Right lobe of liver (tissue), 6 donors: ENCODE measurements at regions of chr20 and their contacts with region 1.

Region 1: GRCh38 chr20:44388466-44389023 is 33.0 kb downstream of the HNF4A start:
- DNase-seq: peak; percentile 83 to 97 (median 96)
- ATAC-seq: peak; percentile 69 to 88 (median 80)
- H3K4me3 ChIP-seq: peak overlapping the region in 1 of 3 donors; percentile 26
- H3K27ac ChIP-seq: peak overlapping the region in 2 of 3 donors; percentile 94 to 97
- H3K4me1 ChIP-seq: peaks cover 0 to 78% (median 29%) of the 10 kb centered on the region in 4 donors
- H3K27me3 ChIP-seq: no peaks in the 10 kb centered on the region
- CTCF ChIP-seq: peak; percentile 81 to 89 (median 87)
- POLR2A ChIP-seq: no peak

Region 2: GRCh38 chr20:44609511-44610312 is 221.2 kb after region 1 on chr20:
- intact Hi-C with region 1: loop called in 1 of 2 experiments (anchors 10 kb)
- DNase-seq: peak; percentile 87 to 91 (median 90)
- ATAC-seq: peak; percentile 97 to 98 (median 98)
- H3K4me3 ChIP-seq: peak overlapping the region; percentile 3 to 35 (median 35)
- H3K27ac ChIP-seq: peak overlapping the region; percentile 65 to 83 (median 78)
- H3K4me1 ChIP-seq: peaks cover 0 to 24% (median 5%) of the 10 kb centered on the region in 4 donors
- H3K27me3 ChIP-seq: no peaks in the 10 kb centered on the region
- CTCF ChIP-seq: peak; percentile 95 to 97 (median 96)
- POLR2A ChIP-seq: no peak